IMR-90 (cell line): ENCODE measurements at regions of chr19 and their contacts with region 1.

Region 1: DNA sequence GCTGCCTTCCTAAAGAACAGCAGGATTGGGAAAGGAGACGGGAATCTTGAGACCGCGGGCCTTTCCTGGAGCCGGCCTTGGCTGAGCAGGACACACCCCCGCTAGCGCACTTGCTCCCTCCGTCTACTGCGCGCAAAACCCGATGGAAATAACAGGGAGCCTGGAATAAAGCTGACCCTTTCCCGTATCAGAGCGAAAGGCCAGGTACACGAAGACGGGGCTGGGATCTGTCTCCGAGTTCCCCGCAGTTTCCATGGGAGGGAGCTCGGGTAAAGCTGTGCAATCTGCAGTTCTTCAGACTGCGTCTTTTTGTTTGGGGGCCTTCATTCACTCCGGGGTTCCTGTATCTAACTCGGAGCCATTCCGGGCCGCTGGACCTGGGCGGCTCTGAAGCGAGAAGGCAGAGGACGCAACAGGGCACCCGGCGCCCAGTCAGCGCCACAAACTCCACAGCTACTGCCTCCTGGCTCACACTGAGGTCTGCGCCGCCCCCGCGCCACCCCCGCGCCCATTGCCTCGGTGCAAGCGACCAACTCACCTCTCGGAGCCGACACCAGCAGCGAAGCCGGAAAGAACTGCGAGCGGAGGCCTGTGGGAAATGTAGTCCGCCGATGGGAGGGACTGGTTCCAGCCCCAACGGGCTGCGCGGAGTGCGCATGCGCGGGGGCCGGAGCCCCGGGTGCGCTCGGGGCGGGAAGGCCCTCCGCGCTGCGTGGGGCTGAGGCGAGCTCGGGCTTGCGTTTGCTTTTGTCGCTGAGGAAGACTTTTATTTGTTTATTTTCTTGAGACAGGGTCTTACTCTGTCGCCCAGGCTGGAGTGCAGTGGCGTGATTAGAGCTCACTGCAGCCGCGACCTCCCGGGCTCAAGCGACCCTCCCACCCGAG is at the start of gene ZFP14:
- DNase-seq: peak; percentile 91
- ATAC-seq: peak; percentile 98
- H3K4me3 ChIP-seq: peak within 1 kb of the TSS; percentile 66
- H3K27ac ChIP-seq: peak within 1 kb of the TSS; percentile 70
- H3K4me1 ChIP-seq: peaks cover 4% of the 10 kb centered on the region; the same call in 1 of the 2 replicates
- H3K27me3 ChIP-seq: no peaks in the 10 kb centered on the region
- CTCF ChIP-seq: peak; percentile 24; the same call in 1 of the 2 replicates
- POLR2A ChIP-seq: no peak
- RAD21 ChIP-seq: peak; percentile 41; the same call in 1 of the 2 replicates
- total RNA-seq, gene ZFP14: 2.0 and 2.2 TPM in 2 replicates

Region 2: GRCh38 chr19:36214386-36215275 is 164.2 kb before region 1 on chr19 and contains the starts of genes ZNF146 and ZNF565:
- CTCF ChIA-PET with region 1: no interaction called
- POLR2A ChIA-PET with region 1: no interaction called
- dilution Hi-C with region 1: no loop called
- in situ Hi-C with region 1: no loop called
- intact Hi-C with region 1: loop called (anchors 5 kb)
- DNase-seq: peak; percentile 98
- ATAC-seq: peak; percentile 96
- H3K4me3 ChIP-seq: peak within 1 kb of the TSS; percentile 67
- H3K27ac ChIP-seq: peak within 1 kb of the TSS; percentile 92
- H3K4me1 ChIP-seq: peaks cover 2% of the 10 kb centered on the region
- H3K27me3 ChIP-seq: no peaks in the 10 kb centered on the region
- CTCF ChIP-seq: no peak
- POLR2A ChIP-seq: peak; percentile 88
- RAD21 ChIP-seq: no peak
- total RNA-seq, gene ZNF146: 106 and 129 TPM in 2 replicates
- total RNA-seq, gene ZNF565: 6.4 and 7.5 TPM in 2 replicates

Region 3: GRCh38 chr19:36418287-36419001 is 39.6 kb after region 1 on chr19 and contains the start of gene ZFP82:
- CTCF ChIA-PET with region 1: no interaction called
- POLR2A ChIA-PET with region 1: no interaction called
- dilution Hi-C with region 1: no loop called
- in situ Hi-C with region 1: no loop called
- intact Hi-C with region 1: loop called (anchors 5 kb)
- DNase-seq: peak; percentile 68
- ATAC-seq: peak; percentile 92
- H3K4me3 ChIP-seq: peak within 1 kb of the TSS; percentile 66
- H3K27ac ChIP-seq: peak within 1 kb of the TSS; percentile 81
- H3K4me1 ChIP-seq: peaks cover 5% of the 10 kb centered on the region; the same call in 1 of the 2 replicates
- H3K27me3 ChIP-seq: no peaks in the 10 kb centered on the region
- CTCF ChIP-seq: no peak
- POLR2A ChIP-seq: no peak
- RAD21 ChIP-seq: no peak
- total RNA-seq, gene ZFP82: 3.9 and 5.0 TPM in 2 replicates